ENCODE measurements at regions of chr5 and their contacts with region 1.

Region 1: DNA sequence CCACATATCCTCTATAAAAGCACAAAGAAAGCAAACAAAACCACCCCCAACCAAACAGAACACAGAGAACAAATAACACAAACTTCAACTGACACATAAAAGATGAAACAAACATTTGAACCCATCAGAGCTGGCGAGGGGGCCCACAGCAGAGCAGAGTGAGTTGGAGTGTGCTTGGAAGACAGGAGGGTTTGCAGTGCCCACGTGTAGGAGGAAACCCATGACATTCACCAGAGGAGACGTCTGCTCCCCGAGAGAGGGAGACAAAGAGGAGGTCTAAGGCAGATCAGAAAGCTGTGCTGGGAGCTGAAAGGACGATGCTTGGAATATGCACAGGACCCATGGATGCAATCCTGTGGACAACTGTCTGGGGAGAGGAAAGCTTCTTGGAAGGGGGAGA is 27.0 kb downstream of the MRPL36 start:
- DNase-seq: peak; percentile 26
- H3K4me3 ChIP-seq: no peak overlapping the region
- CTCF ChIP-seq: peak; percentile 68

Region 2: DNA sequence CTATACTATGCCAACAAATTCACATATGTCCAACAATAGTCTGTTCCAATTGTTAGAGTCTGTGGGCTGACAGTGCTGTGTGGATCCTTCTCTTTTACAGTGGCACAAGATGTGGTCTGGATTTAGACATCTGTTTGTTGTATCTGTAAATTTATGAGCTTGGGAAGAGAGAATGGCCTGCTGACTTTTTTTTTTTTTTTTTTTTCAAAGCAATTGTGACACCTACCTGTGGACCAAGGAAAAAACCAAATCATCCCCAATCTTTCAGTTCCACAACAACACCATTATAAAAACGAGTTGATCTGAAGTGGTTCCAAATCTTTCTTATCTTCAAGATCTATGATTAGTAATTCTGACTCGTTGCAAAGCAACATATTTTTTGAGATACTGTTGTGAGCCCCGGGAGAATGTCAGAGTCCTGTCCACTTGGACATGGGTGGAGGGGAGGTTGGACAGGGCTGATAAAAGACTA is 974.0 kb after region 1 on chr5:
- in situ Hi-C with region 1: loop called (anchors 5 kb)
- DNase-seq: no peak
- H3K4me3 ChIP-seq: peak overlapping the region; percentile 83
- CTCF ChIP-seq: no peak

Measured in astrocyte of the cerebellum (primary cell).